CD14-positive monocyte (primary cell): ENCODE measurements at regions of chr9 and their contacts with region 1.

Region 1: DNA sequence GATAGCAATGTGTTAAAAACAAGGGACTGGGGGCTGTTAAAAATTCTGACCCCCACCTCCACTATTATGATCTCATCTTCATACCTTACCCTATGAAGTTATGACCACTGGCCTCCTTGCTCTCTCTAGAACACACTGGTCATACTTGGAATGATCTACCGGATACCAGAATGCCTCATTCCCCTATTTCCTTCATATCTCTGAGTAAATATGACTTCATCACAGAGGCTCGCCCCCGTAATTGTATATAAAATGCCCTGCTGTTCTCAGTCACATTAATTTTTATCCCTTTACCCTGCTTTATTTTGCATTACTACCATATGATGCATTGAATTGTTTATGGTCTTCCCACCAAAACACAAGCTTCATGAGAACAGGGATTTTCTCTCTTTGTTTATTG is 29.2 kb downstream of the IZUMO3 start:
- DNase-seq: no peak
- H3K4me3 ChIP-seq: no peak overlapping the region
- H3K4me3 Mint-ChIP-seq: no peak overlapping the region
- H3K27ac ChIP-seq: no peak overlapping the region
- H3K27ac Mint-ChIP-seq: no peak overlapping the region
- H3K4me1 ChIP-seq: no peaks in the 10 kb centered on the region
- H3K4me1 Mint-ChIP-seq: no peaks in the 10 kb centered on the region
- H3K27me3 ChIP-seq: no peaks in the 10 kb centered on the region
- H3K27me3 Mint-ChIP-seq: no peaks in the 10 kb centered on the region
- CTCF ChIP-seq: no peak

Region 2: DNA sequence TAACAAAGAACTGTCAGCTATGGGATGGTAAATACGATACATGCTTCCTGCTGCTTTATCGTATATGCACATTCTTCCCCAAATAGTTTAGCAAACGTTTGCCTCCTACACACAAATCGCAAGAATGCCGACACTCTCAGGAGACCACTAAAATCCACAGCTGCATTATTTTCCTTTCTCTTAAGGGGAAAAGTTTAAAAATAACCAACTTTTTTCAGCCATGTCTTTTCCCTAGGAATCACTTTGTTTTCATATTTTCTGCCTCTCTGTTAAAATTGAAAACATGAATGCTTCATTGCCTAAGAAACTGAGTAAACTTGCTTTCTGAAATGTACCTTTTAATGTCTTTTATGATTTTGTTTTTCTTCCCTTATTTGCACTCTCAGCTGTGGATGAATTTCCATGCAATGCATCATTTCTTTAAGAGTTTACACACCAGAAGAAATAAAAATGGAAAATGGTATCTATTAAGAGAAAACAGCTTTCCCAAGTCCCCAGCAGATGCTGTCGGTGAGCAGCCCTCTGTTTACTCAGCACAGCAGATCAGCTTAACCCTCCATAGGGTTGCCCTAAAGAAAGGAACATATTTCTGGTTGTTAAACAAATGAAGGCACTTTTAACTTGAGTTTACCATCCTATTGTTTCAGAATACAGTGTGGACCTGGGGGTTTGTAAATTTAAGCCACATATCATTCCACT is 37.0 kb before region 1 on chr9:
- intact Hi-C with region 1: loop called in 1 of 2 experiments (anchors 10 kb)
- DNase-seq: no peak
- H3K4me3 ChIP-seq: no peak overlapping the region
- H3K4me3 Mint-ChIP-seq: no peak overlapping the region
- H3K27ac ChIP-seq: no peak overlapping the region
- H3K27ac Mint-ChIP-seq: no peak overlapping the region
- H3K4me1 ChIP-seq: no peaks in the 10 kb centered on the region
- H3K4me1 Mint-ChIP-seq: no peaks in the 10 kb centered on the region
- H3K27me3 ChIP-seq: no peaks in the 10 kb centered on the region
- H3K27me3 Mint-ChIP-seq: no peaks in the 10 kb centered on the region
- CTCF ChIP-seq: no peak

Region 3: GRCh38 chr9:24500761-24501160 is 15.7 kb before region 1 on chr9:
- intact Hi-C with region 1: loop called in 1 of 2 experiments (anchors 1 kb)
- DNase-seq: no peak
- H3K4me3 ChIP-seq: no peak overlapping the region
- H3K4me3 Mint-ChIP-seq: no peak overlapping the region
- H3K27ac ChIP-seq: no peak overlapping the region
- H3K27ac Mint-ChIP-seq: no peak overlapping the region
- H3K4me1 ChIP-seq: no peaks in the 10 kb centered on the region
- H3K4me1 Mint-ChIP-seq: no peaks in the 10 kb centered on the region
- H3K27me3 ChIP-seq: no peaks in the 10 kb centered on the region
- H3K27me3 Mint-ChIP-seq: no peaks in the 10 kb centered on the region
- CTCF ChIP-seq: no peak

Region 4: GRCh38 chr9:24545285-24545684 is 28.8 kb after region 1 on chr9:
- intact Hi-C with region 1: no loop called
- DNase-seq: no peak
- H3K4me3 ChIP-seq: no peak overlapping the region
- H3K4me3 Mint-ChIP-seq: no peak overlapping the region
- H3K27ac ChIP-seq: no peak overlapping the region
- H3K27ac Mint-ChIP-seq: no peak overlapping the region
- H3K4me1 ChIP-seq: no peaks in the 10 kb centered on the region
- H3K4me1 Mint-ChIP-seq: no peaks in the 10 kb centered on the region
- H3K27me3 ChIP-seq: no peaks in the 10 kb centered on the region
- H3K27me3 Mint-ChIP-seq: peaks cover 0 to 2% (median 0%) of the 10 kb centered on the region in 3 donors
- CTCF ChIP-seq: no peak